Body of pancreas (tissue), 4 donors: ENCODE measurements at regions of chr9 and their contacts with region 1.

Region 1: GRCh38 chr9:104386425-104387069 is 117.5 kb upstream of the OR13F1 start:
- DNase-seq: no peak
- ATAC-seq: peak; percentile 86
- H3K4me3 ChIP-seq: no peak overlapping the region
- H3K27ac ChIP-seq: no peak overlapping the region
- H3K4me1 ChIP-seq: peaks cover 11% of the 10 kb centered on the region
- H3K27me3 ChIP-seq: no peaks in the 10 kb centered on the region
- CTCF ChIP-seq: peak; percentile 38 to 87 (median 80)
- POLR2A ChIP-seq: no peak

Region 2: DNA sequence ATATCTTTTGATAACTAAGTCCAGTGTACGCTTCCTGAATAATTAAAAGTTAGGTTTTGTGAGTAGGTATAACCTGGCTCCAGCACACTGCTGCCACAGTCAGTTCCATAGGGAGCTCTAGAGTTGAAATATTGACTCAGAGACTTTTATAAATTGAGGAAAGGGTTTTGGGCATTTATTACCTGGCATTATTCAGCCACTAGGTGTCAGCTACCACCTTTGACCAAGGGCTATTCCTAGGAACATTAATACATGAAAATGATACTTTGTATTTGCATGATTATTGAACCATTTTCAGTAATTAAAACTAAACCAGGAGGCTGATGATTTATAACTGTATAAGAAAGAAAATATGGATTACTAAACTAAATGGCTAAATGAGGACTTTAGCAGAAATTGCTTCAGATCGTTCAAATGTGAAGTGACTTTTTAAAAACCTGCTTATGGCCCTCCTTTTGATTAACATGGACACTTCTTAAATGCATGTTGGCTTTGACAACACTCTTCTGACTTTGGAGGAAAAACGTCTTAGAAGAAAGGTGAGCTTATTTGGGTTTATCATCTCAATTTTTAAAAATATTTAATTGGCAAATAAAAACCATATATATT is 209.4 kb before region 1 on chr9:
- intact Hi-C with region 1: loop called (anchors 5 kb)
- DNase-seq: peak in 2 of 4 donors; percentile 21 to 32
- ATAC-seq: peak; percentile 72
- H3K4me3 ChIP-seq: no peak overlapping the region
- H3K27ac ChIP-seq: no peak overlapping the region
- H3K4me1 ChIP-seq: no peaks in the 10 kb centered on the region
- H3K27me3 ChIP-seq: no peaks in the 10 kb centered on the region
- CTCF ChIP-seq: peak; percentile 53 to 86 (median 78)
- POLR2A ChIP-seq: no peak

Region 3: GRCh38 chr9:104247899-104248460 is 138.6 kb before region 1 on chr9:
- intact Hi-C with region 1: no loop called
- DNase-seq: no peak
- ATAC-seq: no peak
- H3K4me3 ChIP-seq: no peak overlapping the region
- H3K27ac ChIP-seq: no peak overlapping the region
- H3K4me1 ChIP-seq: no peaks in the 10 kb centered on the region
- H3K27me3 ChIP-seq: no peaks in the 10 kb centered on the region
- CTCF ChIP-seq: no peak
- POLR2A ChIP-seq: no peak

Region 4: GRCh38 chr9:104269996-104270963 is 116.3 kb before region 1 on chr9:
- intact Hi-C with region 1: loop called (anchors 5 kb)
- DNase-seq: peak in 1 of 4 donors; percentile 17
- ATAC-seq: peak; percentile 96
- H3K4me3 ChIP-seq: no peak overlapping the region
- H3K27ac ChIP-seq: peak overlapping the region; percentile 44 to 73 (median 68)
- H3K4me1 ChIP-seq: peaks cover 40% of the 10 kb centered on the region
- H3K27me3 ChIP-seq: no peaks in the 10 kb centered on the region
- CTCF ChIP-seq: no peak
- POLR2A ChIP-seq: no peak